BJ (cell line): ENCODE measurements at regions of chr3 and their contacts with region 1.

Region 1: DNA sequence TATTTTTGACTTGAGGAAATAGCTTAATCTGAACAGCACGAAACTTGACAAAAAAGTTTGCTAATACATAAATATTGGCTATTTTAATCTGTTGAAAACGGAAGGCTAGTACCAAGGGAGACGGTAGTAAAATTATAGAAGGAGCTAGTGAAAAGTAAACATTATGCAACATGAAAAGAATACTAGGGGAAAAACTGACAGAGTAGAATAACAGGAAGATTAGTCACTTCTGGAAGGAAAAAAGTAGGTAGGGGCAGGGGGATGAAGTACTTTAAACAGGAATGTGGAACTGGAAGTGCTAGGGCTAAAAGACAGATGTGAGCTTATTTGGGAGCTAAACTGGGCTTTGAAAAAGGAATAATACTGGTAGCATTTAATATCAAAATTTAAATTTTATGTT is 60.1 kb downstream of the MBNL1 start:
- DNase-seq: peak; percentile 62
- H3K4me3 ChIP-seq: no peak overlapping the region
- H3K27me3 ChIP-seq: no peaks in the 10 kb centered on the region
- CTCF ChIP-seq: no peak

Region 2: DNA sequence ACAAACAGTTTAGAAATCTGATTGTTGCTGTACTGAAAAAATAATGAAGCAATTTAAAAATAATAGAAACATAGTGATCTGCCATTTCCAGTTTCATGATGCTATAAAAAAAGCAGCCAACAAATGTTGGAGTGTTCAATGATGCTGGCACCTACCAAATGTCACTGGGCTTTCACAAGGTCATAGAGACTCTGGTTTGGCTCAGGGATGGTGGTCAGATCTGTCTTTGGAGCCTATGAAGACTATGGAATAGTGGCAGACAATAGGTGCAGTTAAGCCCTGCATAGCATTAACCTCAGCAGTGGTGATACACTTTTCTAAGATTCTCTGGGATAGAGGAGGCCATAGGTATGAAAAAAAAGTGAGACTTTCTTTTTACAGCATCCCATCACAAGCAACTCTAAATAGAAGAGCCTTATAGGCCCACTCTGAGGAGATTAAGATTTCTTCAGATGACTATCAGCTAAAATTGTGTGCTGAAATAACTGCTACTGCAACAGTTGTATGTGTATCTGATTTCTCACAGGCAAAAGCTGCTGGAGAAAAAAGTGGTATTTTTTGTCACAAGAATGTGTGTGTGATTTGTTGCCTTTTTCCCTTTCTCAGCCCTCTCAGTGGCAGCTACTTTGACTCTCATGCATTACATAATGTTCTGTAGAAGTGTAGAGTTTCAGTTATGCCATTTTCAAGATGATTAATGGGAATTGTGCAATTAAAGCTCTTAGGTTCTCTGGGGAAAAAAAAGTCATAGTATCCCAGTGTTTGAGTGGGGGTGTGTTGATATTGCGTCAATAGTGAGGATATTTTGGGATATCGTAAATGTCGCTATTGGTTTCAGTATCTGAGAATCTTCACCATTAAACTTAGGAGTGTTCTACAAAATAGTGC is 77.3 kb after region 1 on chr3:
- CTCF ChIA-PET with region 1: no interaction called
- POLR2A ChIA-PET with region 1: interaction called, 11 read pairs
- DNase-seq: peak; percentile 95
- H3K4me3 ChIP-seq: no peak overlapping the region
- H3K27me3 ChIP-seq: no peaks in the 10 kb centered on the region
- CTCF ChIP-seq: no peak

Region 3: GRCh38 chr3:152436707-152437590 is 108.1 kb after region 1 on chr3:
- CTCF ChIA-PET with region 1: no interaction called
- POLR2A ChIA-PET with region 1: no interaction called
- DNase-seq: no peak
- H3K4me3 ChIP-seq: no peak overlapping the region
- H3K27me3 ChIP-seq: no peaks in the 10 kb centered on the region
- CTCF ChIP-seq: no peak